ENCODE measurements at regions of chr3 and their contacts with region 1.

Region 1: DNA sequence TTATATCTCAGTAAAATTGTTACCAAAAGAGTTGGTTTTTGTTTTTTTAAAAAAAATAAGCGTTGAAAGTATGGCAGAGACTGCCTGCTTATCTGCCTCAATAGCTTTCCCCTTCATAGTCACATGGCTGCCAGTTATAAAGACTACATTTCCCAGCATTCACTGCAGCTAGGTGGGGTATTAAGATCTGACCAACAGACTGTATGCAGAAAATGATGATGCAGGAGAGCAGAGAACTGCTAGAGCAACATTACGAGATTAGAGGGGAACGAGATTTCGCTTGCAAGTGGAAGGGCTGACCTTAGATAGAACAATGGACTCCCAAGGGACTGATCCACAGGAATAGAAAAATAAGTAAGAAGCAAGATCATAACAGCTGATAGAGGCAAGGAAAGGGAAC is 14.3 kb downstream of the RHOA start:
- DNase-seq: no peak
- ATAC-seq: peak; percentile 69
- H3K4me3 ChIP-seq: no peak overlapping the region
- H3K27ac ChIP-seq: peak overlapping the region in 1 of 2 donors; percentile 23
- H3K4me1 ChIP-seq: peaks cover 0 to 3% of the 10 kb centered on the region in 2 donors
- H3K27me3 ChIP-seq: no peaks in the 10 kb centered on the region

Region 2: GRCh38 chr3:49028673-49029562 is 368.6 kb before region 1 on chr3 and contains the start of gene IMPDH2:
- intact Hi-C with region 1: no loop called
- DNase-seq: peak; percentile 96 to 98
- ATAC-seq: peak; percentile 97
- H3K4me3 ChIP-seq: peak within 1 kb of the TSS; percentile 19 to 37
- H3K27ac ChIP-seq: peak within 1 kb of the TSS in 1 of 2 donors; percentile 72
- H3K4me1 ChIP-seq: no peaks in the 10 kb centered on the region
- H3K27me3 ChIP-seq: peaks cover 0 to 1% of the 10 kb centered on the region in 2 donors
- total RNA-seq, gene IMPDH2: 84.6 to 101 TPM

Region 3: DNA sequence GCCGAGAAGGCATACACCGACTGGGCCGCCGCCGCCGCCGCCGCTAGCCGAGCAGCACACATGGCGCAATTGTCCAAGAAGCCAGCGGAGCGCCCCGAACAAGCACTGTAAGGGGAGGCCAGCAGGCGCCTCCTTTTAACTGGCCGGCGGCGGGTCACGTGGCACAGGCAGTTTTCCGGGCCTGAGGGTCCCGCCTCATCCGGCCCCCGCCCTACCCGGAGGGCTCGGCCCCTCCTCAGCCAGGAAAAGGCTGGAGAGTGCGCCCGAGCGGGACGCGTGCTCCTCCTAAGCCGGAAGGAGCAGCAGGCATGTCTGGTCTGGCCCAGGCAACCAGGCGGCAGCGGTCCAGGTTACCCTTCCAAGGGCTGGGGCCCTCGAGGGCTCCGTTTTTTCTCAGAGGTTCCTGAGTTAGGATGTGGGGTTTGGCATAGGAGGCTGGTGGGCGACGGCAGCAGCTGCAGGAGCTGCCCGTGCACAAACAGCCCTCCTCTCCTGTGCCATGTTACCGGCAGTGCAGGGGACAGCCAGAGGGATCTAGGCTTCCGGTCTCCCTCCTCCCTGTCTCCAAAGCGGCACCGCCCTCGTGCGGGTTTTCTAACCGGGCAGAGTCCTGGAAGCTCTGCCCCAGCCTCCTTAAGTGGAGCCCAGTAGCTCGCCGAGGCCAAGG is 39.1 kb before region 1 on chr3 and contains the start of gene GPX1:
- intact Hi-C with region 1: loop called in 1 of 2 experiments (anchors 5 kb)
- DNase-seq: peak; percentile 98
- ATAC-seq: peak; percentile 97
- H3K4me3 ChIP-seq: peak within 1 kb of the TSS; percentile 39 to 52
- H3K27ac ChIP-seq: peak within 1 kb of the TSS; percentile 64 to 87
- H3K4me1 ChIP-seq: no peaks in the 10 kb centered on the region
- H3K27me3 ChIP-seq: no peaks in the 10 kb centered on the region
- total RNA-seq, gene GPX1: 174 to 209 TPM

Region 4: DNA sequence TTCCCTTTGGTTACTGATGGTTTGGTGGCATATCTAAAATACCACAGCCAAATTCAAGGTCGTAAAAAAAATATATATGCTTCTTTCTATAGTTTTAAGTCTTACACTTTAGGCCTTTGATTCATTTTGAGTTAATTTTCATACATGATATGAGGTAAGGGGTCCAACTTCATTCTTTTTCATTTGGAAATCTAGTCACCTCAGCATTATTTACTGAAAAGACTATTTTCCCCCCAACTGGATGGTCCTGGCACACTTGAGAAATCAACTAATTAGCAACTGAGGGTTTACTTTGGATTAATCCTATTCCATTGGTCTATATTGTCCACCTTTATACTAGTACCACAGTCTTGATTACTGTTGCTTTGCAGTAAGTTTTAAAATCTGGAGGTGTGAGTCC is 11.9 kb before region 1 on chr3:
- intact Hi-C with region 1: loop called in 1 of 2 experiments (anchors 2 kb)
- DNase-seq: no peak
- ATAC-seq: no peak
- H3K4me3 ChIP-seq: no peak overlapping the region
- H3K27ac ChIP-seq: no peak overlapping the region
- H3K4me1 ChIP-seq: peaks cover 0 to 3% of the 10 kb centered on the region in 2 donors
- H3K27me3 ChIP-seq: no peaks in the 10 kb centered on the region